ENCODE measurements at regions of chr20 and their contacts with region 1.

Region 1: GRCh38 chr20:20860078-20860806 is 147.8 kb upstream of the RALGAPA2 start:
- DNase-seq: peak; percentile 74
- ATAC-seq: peak; percentile 96
- H3K4me3 ChIP-seq: no peak overlapping the region
- H3K27ac ChIP-seq: no peak overlapping the region
- H3K4me1 ChIP-seq: no peaks in the 10 kb centered on the region
- H3K27me3 ChIP-seq: no peaks in the 10 kb centered on the region
- CTCF ChIP-seq: peak; percentile 89
- POLR2A ChIP-seq: no peak
- RAD21 ChIP-seq: peak; percentile 73

Region 2: GRCh38 chr20:21114584-21114983 is 254.3 kb after region 1 on chr20:
- CTCF ChIA-PET with region 1: no interaction called
- POLR2A ChIA-PET with region 1: no interaction called
- dilution Hi-C with region 1: no loop called
- in situ Hi-C with region 1: no loop called
- intact Hi-C with region 1: no loop called
- DNase-seq: no peak
- ATAC-seq: no peak
- H3K4me3 ChIP-seq: no peak overlapping the region
- H3K27ac ChIP-seq: no peak overlapping the region
- H3K4me1 ChIP-seq: no peaks in the 10 kb centered on the region
- H3K27me3 ChIP-seq: peaks cover 28% of the 10 kb centered on the region
- CTCF ChIP-seq: no peak
- POLR2A ChIP-seq: no peak
- RAD21 ChIP-seq: no peak

Region 3: GRCh38 chr20:21505161-21505809 is 645.0 kb after region 1 on chr20:
- CTCF ChIA-PET with region 1: interaction called, 4 read pairs
- POLR2A ChIA-PET with region 1: no interaction called
- dilution Hi-C with region 1: no loop called
- in situ Hi-C with region 1: loop called (anchors 5 kb)
- intact Hi-C with region 1: loop called (anchors 1 kb)
- DNase-seq: peak; percentile 22
- ATAC-seq: peak; percentile 84
- H3K4me3 ChIP-seq: no peak overlapping the region
- H3K27ac ChIP-seq: no peak overlapping the region
- H3K4me1 ChIP-seq: no peaks in the 10 kb centered on the region; the same call in 1 of the 2 replicates
- H3K27me3 ChIP-seq: peaks cover 61% of the 10 kb centered on the region
- CTCF ChIP-seq: peak; percentile 96
- POLR2A ChIP-seq: peak; percentile 39; the same call in 1 of the 2 replicates
- RAD21 ChIP-seq: peak; percentile 96

Region 4: DNA sequence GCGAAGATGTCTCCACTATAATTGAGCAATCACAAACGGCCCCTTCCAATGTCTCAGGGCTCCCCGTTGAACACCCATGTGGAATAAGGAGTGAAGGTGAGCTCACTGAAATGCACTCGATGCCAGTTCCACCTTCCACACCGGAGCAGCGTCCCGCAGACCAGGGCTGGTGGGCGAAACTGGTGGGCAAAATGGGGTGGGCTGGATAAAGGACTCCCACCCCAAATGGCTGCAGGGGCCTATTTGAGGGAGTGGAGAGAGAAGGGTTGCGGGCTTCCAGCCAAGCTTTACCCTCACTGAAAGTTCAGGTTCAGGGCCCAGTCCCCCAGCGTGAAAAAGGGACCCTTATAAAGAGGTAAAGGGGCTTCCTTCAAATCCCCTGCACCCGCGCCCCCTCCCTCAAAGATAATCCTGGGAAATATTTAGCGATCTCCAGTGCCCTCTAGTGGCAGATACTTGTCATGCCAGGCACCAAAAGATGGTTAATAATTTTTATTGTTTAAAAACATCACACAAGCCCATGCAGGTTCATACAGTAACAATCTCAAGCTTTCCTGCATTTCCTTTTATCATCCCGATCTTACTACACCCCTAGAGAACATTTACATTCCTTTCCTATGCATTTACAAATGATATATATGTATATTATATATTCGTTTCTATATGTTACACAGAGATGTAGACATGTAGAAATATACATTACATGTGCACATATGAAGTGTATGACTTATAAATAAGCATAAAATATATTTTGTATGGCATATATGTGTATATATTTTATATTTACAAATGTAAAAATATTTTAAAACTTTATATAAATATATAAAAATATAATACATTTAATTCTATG is 711.8 kb after region 1 on chr20:
- CTCF ChIA-PET with region 1: no interaction called
- POLR2A ChIA-PET with region 1: no interaction called
- dilution Hi-C with region 1: no loop called
- in situ Hi-C with region 1: no loop called
- intact Hi-C with region 1: loop called (anchors 1 kb)
- DNase-seq: no peak
- ATAC-seq: peak; percentile 61
- H3K4me3 ChIP-seq: no peak overlapping the region
- H3K27ac ChIP-seq: no peak overlapping the region
- H3K4me1 ChIP-seq: no peaks in the 10 kb centered on the region
- H3K27me3 ChIP-seq: no peaks in the 10 kb centered on the region
- CTCF ChIP-seq: peak; percentile 80
- POLR2A ChIP-seq: no peak
- RAD21 ChIP-seq: peak; percentile 57